Heart right ventricle (tissue), 16 donors: ENCODE measurements at regions of chr19 and their contacts with region 1.

Region 1: DNA sequence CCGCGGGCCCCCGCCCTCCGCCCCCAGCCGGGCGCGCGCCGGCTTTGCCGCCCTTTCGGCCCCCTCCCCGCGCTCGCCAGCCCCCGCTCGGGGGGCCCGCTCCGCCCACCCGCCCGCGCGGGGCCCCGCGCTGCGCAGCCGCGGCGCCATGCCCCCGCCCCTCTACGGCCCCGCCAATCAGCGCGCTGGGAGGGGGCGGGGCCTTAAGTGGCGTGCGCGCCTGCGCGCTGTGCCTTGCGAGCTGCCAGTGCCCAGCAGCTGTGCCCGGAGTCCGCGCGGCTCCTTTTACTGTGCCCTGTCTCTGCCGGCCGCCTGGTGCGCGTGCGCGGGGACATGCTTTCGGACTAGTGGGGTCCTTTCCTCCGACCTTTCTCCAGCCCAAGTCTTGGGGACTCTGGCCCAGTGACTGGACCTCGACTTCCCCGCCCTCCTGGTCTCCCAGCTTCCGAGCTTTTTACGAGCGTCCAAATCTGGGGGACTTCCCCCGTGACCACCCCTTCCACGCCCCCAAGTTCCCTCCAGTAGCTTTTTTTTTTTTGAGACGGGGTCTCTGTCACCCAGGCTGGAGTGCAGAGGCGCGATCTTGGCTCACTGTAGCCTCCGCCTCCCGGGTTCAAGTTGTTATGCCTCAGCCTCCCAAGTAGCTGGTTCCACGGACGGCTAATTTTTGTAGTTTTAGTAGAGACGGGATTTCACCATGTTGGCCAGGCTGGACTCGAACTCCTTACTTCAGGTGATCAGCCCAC is at the start of gene MBD3:
- DNase-seq: peak; percentile 91 to 94
- ATAC-seq: peak; percentile 90 to 97 (median 94)
- H3K4me3 ChIP-seq: peak within 1 kb of the TSS; percentile 63 to 90 (median 77)
- H3K27ac ChIP-seq: peak within 1 kb of the TSS; percentile 85 to 99 (median 96)
- H3K4me1 ChIP-seq: peaks cover 4 to 29% (median 26%) of the 10 kb centered on the region in 9 donors
- H3K27me3 ChIP-seq: no peaks in the 10 kb centered on the region
- CTCF ChIP-seq: no peak
- total RNA-seq, gene MBD3: 34.5 to 101 (median 47.7) TPM

Region 2: GRCh38 chr19:1523412-1524291 is 69.3 kb before region 1 on chr19 and contains the start of gene PLK5:
- intact Hi-C with region 1: no loop called
- DNase-seq: no peak
- ATAC-seq: no peak
- H3K4me3 ChIP-seq: peak within 1 kb of the TSS in 5 of 10 donors; percentile 5 to 26 (median 13)
- H3K27ac ChIP-seq: no peak within 1 kb of the TSS
- H3K4me1 ChIP-seq: peaks cover 0 to 11% (median 4%) of the 10 kb centered on the region in 9 donors
- H3K27me3 ChIP-seq: peaks cover 26 to 58% (median 53%) of the 10 kb centered on the region in 7 donors
- CTCF ChIP-seq: peak in 2 of 9 donors; percentile 19 to 36
- total RNA-seq, gene PLK5: 0.11 TPM in 1 of 10 donors, not detected in the others

Region 3: GRCh38 chr19:1605236-1606137 is 12.6 kb after region 1 on chr19 and contains the start of gene UQCR11:
- intact Hi-C with region 1: loop called in 1 of 10 experiments (anchors 1 kb)
- DNase-seq: peak; percentile 94 to 96
- ATAC-seq: peak; percentile 94 to 98 (median 97)
- H3K4me3 ChIP-seq: peak within 1 kb of the TSS; percentile 92 to 100 (median 96)
- H3K27ac ChIP-seq: peak within 1 kb of the TSS; percentile 88 to 100 (median 97)
- H3K4me1 ChIP-seq: peaks cover 12 to 49% (median 35%) of the 10 kb centered on the region in 9 donors
- H3K27me3 ChIP-seq: no peaks in the 10 kb centered on the region
- CTCF ChIP-seq: peak; percentile 20 to 76 (median 59)
- total RNA-seq, gene UQCR11: 569 to 1,132 (median 804) TPM